Right ventricle myocardium inferior (tissue), 1 donor: ENCODE measurements at regions of chr13 and their contacts with region 1.

Region 1: GRCh38 chr13:40682449-40683240 is 16.2 kb upstream of the FOXO1 start:
- DNase-seq: no peak
- ATAC-seq: no peak

Region 2: DNA sequence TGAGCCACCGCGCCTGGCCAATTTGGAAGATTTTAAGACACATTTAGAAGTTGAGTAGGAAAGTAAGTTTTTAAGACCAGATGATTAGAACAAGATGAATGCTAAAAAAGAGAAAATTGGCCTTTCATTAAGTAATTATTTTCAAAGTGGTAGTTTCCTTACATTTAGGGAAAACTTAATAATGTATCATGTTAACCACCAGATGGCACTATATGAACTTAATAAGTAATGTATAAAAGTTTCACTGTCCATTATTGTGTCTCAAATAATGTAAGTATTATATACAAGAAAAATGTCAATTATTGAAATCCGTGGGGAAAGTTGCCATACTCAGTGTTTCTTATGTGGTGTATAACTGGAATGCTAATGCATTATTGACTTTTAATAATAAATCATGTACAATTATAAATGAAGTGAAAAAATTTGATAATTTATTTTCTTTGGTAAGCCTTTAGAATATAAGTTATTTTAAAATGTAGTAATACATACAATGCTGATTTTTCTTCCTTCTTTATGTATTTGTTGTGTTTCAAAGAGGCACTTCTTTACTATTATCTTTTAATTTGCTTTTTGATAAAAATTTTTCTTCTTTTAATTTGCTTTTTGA is 998.0 kb before region 1 on chr13:
- intact Hi-C with region 1: loop called (anchors 10 kb)
- DNase-seq: no peak
- ATAC-seq: no peak

Region 3: GRCh38 chr13:39765801-39766463 is 916.7 kb before region 1 on chr13:
- intact Hi-C with region 1: loop called (anchors 5 kb)
- DNase-seq: no peak
- ATAC-seq: peak; percentile 81

Region 4: GRCh38 chr13:39777527-39778061 is 905.1 kb before region 1 on chr13:
- intact Hi-C with region 1: loop called (anchors 5 kb)
- DNase-seq: no peak
- ATAC-seq: no peak

Region 5: GRCh38 chr13:39942552-39943273 is 739.9 kb before region 1 on chr13:
- intact Hi-C with region 1: loop called (anchors 5 kb)
- DNase-seq: peak; percentile 81
- ATAC-seq: peak; percentile 93

Region 6: DNA sequence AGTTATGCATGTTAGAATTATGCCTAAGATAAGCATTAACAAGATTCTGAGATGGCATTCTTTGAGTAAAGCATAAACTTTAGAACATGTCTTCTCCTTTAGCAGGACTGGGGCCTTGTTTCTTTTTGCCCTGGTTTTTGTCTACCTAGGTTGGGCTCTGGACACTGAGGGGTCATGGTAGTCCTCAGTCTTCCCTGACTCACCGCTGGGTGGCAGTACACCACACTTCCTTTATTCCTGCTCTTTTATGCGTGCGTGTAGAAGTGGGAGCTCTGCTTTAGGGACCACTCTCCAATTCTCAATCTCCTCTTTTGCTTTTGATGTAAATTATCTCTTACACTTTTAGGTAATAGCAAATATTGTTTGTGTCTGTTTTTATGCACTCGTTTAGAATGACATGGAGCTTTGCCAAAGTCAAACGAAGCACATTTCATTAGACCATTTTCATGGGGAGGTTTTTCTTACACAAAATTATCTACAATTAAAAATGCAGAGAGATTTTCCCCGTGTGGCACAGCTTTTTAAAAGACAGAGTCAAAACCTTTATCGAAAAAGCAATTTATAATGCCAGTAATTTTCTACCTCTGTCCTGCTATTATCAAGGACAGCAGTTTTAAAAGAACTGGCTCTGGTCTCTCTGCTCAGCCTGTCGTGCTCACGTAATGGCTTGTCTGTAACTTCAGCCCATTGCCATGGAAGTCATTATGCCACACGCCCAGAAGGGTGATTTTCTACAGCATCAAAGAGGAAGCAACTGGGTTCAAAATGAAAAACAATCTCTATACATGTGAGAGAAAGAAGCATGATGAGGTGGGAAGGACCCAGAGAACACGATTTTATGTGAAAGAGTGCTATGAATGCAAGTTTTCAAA is 613.2 kb before region 1 on chr13:
- intact Hi-C with region 1: loop called (anchors 2 kb)
- DNase-seq: no peak
- ATAC-seq: peak; percentile 96

Region 7: DNA sequence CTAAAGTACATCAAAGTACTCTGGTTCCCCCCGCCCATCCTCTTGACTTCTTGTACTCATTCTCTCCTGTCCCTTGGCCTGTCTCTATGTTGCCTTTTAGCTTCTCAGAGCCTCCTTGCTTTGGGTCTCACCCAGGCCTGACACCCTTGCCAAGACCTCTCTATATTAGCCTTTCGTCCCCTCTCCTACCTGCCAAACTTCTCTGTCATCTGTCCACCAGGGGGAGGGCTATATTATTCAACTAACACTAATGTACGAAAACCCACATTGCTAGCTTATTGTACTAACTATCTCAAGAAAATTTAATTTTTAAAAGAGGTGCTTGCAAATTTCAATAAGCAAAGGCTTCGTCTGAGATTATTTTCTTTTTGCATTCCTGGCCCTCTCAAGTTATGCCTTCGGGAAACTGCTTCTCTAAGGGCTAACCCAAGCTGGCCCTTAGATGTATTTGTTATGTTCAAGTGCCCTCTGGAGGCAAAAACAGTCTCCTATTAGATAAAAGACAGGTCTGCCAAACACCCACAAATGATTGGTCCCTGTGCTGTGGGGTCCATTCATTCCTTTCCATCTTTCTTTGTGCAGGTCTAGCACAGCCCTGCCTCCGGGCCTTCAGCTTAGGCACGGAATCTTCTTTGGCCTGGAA is 94.6 kb after region 1 on chr13:
- intact Hi-C with region 1: no loop called
- DNase-seq: no peak
- ATAC-seq: peak; percentile 82